GM12878 (cell line): ENCODE measurements at regions of chr6 and their contacts with region 1.

Region 1: DNA sequence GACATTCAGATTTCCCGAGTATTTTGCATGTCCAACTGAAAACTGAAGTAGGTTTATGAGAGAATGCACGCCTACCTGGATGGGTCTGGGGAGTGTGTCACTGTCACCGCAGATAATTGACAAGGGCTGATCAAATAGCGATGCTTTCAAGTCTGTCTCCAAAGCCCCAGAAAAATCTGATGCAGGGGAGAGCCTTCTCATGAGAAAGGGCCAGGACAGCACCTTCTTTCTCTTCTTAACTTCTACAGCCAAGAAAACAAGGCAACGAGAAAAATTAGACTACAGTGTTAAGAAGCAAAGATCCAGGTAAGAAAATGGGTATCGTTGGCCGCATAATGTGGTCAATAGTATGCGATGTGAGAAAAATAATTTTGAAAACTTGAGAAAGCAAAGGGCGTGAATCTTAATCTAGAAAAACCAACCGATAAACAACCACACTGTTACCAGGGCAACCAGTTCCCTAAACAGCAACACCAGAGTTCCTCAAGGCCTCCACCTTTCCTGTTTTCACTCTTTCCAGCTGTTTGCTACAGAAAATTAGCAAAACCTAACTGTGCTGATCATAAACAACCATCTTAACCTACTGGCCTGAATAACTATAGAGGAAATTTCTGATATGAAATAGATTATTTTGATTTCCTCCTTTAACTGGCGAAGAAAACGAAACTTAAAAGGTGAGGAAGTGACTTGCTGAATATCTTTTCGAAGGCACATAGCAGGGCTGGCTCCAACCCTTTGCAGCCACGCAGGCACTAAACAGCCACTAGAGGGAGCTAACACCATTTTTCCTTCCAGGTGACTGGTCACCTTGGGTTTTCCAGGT is 2.6 kb downstream of the TAGAP start:
- DNase-seq: peak; percentile 69
- ATAC-seq: peak; percentile 53
- H3K4me3 ChIP-seq: 0 out of 2 replicates have a peak overlapping the region, but pooled peaks have one; percentile 60
- H3K27ac ChIP-seq: peak overlapping the region; percentile 59
- H3K4me1 ChIP-seq: peaks cover 43% of the 10 kb centered on the region
- H3K27me3 ChIP-seq: no peaks in the 10 kb centered on the region
- CTCF ChIP-seq: peak; percentile 94 to 99 (median 96)
- EP300 ChIP-seq: 0 out of 4 replicates have a peak, but pooled peaks of 1 of the 2 experiments have one; percentile 23
- POLR2A ChIP-seq: no peak
- RAD21 ChIP-seq: peak; percentile 92

Region 2: GRCh38 chr6:158869826-158870648 is 172.2 kb before region 1 on chr6:
- CTCF ChIA-PET with region 1: no interaction called
- POLR2A ChIA-PET with region 1: interaction called, 12 read pairs
- RAD21 ChIA-PET with region 1: no interaction called
- SMC1A ChIA-PET with region 1: interaction called, 3 read pairs
- in situ Hi-C with region 1: no loop called
- intact Hi-C with region 1: no loop called
- DNase-seq: peak; percentile 98
- ATAC-seq: peak; percentile 91
- H3K4me3 ChIP-seq: peak overlapping the region; percentile 62
- H3K27ac ChIP-seq: peak overlapping the region; percentile 91
- H3K4me1 ChIP-seq: peaks cover 39% of the 10 kb centered on the region
- H3K27me3 ChIP-seq: no peaks in the 10 kb centered on the region
- CTCF ChIP-seq: peak; percentile 10 to 43 (median 34); a peak in 4 of 6 replicates
- EP300 ChIP-seq: peak; percentile 96 to 97; a peak in 3 of 4 replicates
- POLR2A ChIP-seq: peak; percentile 98
- RAD21 ChIP-seq: peak; percentile 38

Region 3: DNA sequence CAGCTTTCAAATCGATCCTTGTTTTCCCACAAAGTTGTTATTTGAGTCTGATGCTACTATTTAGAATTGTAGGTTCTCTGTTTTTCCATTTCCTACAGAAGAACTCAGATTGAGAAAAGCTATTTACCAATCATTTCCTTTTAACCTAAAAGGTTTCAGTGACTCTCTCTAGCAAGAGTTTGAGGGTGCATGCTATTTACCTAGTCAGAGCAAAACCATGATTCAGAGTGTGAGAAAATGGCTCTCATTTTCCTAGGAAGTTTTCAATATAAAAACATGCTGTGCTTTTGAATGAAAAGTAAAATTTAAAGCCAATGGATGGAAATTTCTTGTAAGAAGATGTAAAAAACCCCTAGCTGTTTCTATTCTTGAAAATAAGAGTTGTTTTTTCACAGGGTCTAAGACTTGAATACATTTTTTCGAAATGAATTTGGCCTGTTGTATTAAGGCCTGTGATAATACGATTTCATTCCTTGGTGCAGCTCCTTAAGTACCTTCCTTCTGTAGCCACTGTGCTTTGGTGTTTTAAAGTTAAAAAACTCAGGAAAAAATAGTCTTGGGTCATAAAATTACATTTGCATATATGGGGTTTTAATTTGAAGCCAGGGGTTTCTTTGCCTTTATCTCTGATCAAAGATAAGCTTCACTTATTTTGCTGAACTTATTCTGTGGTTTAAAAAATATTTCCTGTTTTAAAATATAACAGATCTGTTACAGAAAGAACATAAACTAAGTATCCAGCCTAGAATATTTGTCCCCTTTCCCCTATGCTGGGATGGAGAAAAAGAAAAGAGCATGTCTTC is 24.3 kb before region 1 on chr6:
- CTCF ChIA-PET with region 1: interaction called, 13 read pairs
- POLR2A ChIA-PET with region 1: interaction called, 9 read pairs
- RAD21 ChIA-PET with region 1: interaction called, 11 read pairs
- SMC1A ChIA-PET with region 1: interaction called, 194 read pairs
- in situ Hi-C with region 1: no loop called
- intact Hi-C with region 1: no loop called
- DNase-seq: no peak
- ATAC-seq: peak; percentile 87
- H3K4me3 ChIP-seq: no peak overlapping the region
- H3K27ac ChIP-seq: no peak overlapping the region
- H3K4me1 ChIP-seq: peaks cover 8% of the 10 kb centered on the region
- H3K27me3 ChIP-seq: no peaks in the 10 kb centered on the region
- CTCF ChIP-seq: no peak
- EP300 ChIP-seq: no peak
- POLR2A ChIP-seq: no peak
- RAD21 ChIP-seq: no peak

Region 4: GRCh38 chr6:159074120-159074684 is 32.0 kb after region 1 on chr6:
- CTCF ChIA-PET with region 1: interaction called, 5 read pairs
- POLR2A ChIA-PET with region 1: interaction called, 12 read pairs
- RAD21 ChIA-PET with region 1: interaction called, 10 read pairs
- SMC1A ChIA-PET with region 1: interaction called, 86 read pairs
- in situ Hi-C with region 1: no loop called
- intact Hi-C with region 1: no loop called
- DNase-seq: no peak
- ATAC-seq: peak; percentile 97
- H3K4me3 ChIP-seq: no peak overlapping the region
- H3K27ac ChIP-seq: no peak overlapping the region
- H3K4me1 ChIP-seq: no peaks in the 10 kb centered on the region
- H3K27me3 ChIP-seq: peaks cover 0 to 5% of the 10 kb centered on the region in 2 experiments; a peak in 2 of 4 replicates
- CTCF ChIP-seq: no peak
- EP300 ChIP-seq: no peak
- POLR2A ChIP-seq: no peak
- RAD21 ChIP-seq: no peak

Region 5: DNA sequence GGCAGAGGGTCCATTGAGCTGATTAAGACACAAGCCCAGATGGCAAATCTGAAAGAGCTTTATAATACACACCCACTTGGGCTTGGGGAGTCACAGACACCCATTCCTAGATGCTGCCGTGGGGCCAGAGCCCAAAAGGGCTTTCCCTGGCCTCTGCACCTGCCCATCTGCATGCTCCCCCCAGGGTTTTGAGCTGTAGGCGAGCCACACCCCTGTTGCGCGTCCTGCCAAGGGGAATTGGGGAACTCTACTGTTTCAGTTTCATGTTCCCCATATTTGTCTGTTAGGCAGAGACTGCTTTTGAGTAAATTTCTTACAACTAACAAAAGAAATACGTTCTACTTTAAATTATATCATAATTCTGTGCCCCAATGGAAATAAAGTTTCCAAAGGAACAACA is 74.1 kb after region 1 on chr6:
- CTCF ChIA-PET with region 1: interaction called, 481 read pairs
- POLR2A ChIA-PET with region 1: interaction called, 5 read pairs
- RAD21 ChIA-PET with region 1: interaction called, 298 read pairs
- SMC1A ChIA-PET with region 1: interaction called, 415 read pairs
- in situ Hi-C with region 1: no loop called
- intact Hi-C with region 1: no loop called
- DNase-seq: no peak
- ATAC-seq: peak; percentile 82
- H3K4me3 ChIP-seq: no peak overlapping the region
- H3K27ac ChIP-seq: no peak overlapping the region
- H3K4me1 ChIP-seq: peaks cover 31% of the 10 kb centered on the region
- H3K27me3 ChIP-seq: peaks cover 0 to 3% of the 10 kb centered on the region in 2 experiments; a peak in 1 of 4 replicates
- CTCF ChIP-seq: no peak
- EP300 ChIP-seq: peak in 1 of 2 experiments; percentile 47; a peak in 2 of 4 replicates
- POLR2A ChIP-seq: no peak
- RAD21 ChIP-seq: no peak

Region 6: DNA sequence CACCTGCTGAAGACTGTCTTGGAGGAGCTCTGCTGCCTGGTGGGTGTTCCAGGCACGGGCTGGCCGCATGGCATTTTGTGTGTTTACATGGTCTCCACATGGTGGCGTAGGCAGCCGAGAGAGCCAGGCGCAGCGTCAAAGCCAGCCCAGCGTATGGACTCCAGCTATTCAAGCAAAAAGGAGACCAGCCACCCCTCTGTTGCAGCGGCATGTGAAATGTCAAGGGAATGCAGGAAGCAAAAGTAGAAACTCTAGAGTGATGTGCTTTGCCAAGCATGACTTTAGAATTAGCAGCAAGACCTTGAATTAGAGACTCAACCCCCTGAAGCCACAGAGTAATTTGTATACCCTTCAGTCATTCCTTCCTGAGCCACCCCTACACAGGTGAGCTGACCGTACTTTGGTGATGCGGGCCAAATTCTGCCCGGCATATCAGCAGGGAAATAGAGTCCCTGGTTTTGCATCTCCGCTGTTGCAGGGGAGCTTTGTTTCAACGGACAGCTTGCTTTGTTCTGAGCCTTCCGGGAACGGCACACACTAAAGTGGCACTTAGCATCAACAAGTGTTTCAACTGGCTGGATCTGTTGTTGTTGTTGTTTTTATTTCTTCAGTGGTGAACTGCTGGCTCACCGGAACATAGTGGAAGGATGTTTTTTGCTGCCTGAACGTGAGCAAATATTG is 175.5 kb after region 1 on chr6:
- CTCF ChIA-PET with region 1: no interaction called
- POLR2A ChIA-PET with region 1: no interaction called
- RAD21 ChIA-PET with region 1: no interaction called
- SMC1A ChIA-PET with region 1: no interaction called
- in situ Hi-C with region 1: no loop called
- intact Hi-C with region 1: no loop called
- DNase-seq: peak; percentile 4
- ATAC-seq: peak; percentile 91
- H3K4me3 ChIP-seq: no peak overlapping the region
- H3K27ac ChIP-seq: no peak overlapping the region
- H3K4me1 ChIP-seq: no peaks in the 10 kb centered on the region
- H3K27me3 ChIP-seq: peaks cover 0 to 8% of the 10 kb centered on the region in 2 experiments; a peak in 3 of 4 replicates
- CTCF ChIP-seq: peak; percentile 40 to 57 (median 44); a peak in 4 of 6 replicates
- EP300 ChIP-seq: no peak
- POLR2A ChIP-seq: no peak
- RAD21 ChIP-seq: peak; percentile 51

Region 7: GRCh38 chr6:159422041-159422984 is 380.1 kb after region 1 on chr6:
- CTCF ChIA-PET with region 1: no interaction called
- POLR2A ChIA-PET with region 1: no interaction called
- RAD21 ChIA-PET with region 1: no interaction called
- SMC1A ChIA-PET with region 1: no interaction called
- in situ Hi-C with region 1: no loop called
- intact Hi-C with region 1: no loop called
- DNase-seq: no peak
- ATAC-seq: no peak
- H3K4me3 ChIP-seq: no peak overlapping the region
- H3K27ac ChIP-seq: no peak overlapping the region
- H3K4me1 ChIP-seq: no peaks in the 10 kb centered on the region
- H3K27me3 ChIP-seq: no peaks in the 10 kb centered on the region; a peak in 1 of 4 replicates
- CTCF ChIP-seq: no peak
- EP300 ChIP-seq: no peak
- POLR2A ChIP-seq: no peak
- RAD21 ChIP-seq: no peak

Region 8: GRCh38 chr6:159968440-159969203 is 926.4 kb after region 1 on chr6 and contains the start of gene IGF2R:
- CTCF ChIA-PET with region 1: no interaction called
- POLR2A ChIA-PET with region 1: no interaction called
- RAD21 ChIA-PET with region 1: no interaction called
- SMC1A ChIA-PET with region 1: no interaction called
- in situ Hi-C with region 1: no loop called
- intact Hi-C with region 1: loop called (anchors 10 kb)
- DNase-seq: no peak
- ATAC-seq: peak; percentile 86
- H3K4me3 ChIP-seq: peak within 1 kb of the TSS; percentile 85
- H3K27ac ChIP-seq: peak within 1 kb of the TSS; percentile 84
- H3K4me1 ChIP-seq: 0 out of 2 replicates have a peak, but pooled peaks cover 3% of the 10 kb centered on the region
- H3K27me3 ChIP-seq: no peaks in the 10 kb centered on the region
- CTCF ChIP-seq: no peak
- EP300 ChIP-seq: no peak; a peak in 1 of 4 replicates
- POLR2A ChIP-seq: peak; percentile 94
- RAD21 ChIP-seq: 0 out of 2 replicates have a peak, but pooled peaks have one; percentile 15
- polyA plus RNA-seq, gene IGF2R: 1.00 to 1.5 TPM